HepG2 (cell line): ENCODE measurements at regions of chr17 and their contacts with region 1.

Region 1: DNA sequence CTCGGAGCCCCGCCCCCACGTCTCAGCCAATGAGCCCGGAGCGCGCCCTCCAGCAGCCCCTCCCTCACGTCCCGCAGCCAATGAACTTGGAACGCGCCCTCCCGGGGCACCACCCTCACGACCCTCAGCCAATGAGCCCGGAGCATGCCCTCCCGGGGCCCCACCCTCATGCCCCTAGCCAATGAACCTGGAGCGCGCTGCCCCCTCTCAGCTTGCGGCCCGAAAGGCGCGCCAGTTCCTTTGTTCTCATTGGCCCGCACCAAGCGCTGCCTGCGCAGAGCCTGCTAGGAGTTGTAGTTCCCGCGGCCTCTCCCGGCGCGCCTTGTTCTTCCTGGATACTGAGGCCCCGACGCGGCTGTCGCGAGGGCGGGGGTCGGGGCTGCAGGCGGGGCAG is at the start of gene LRRC45:
- DNase-seq: peak; percentile 99
- ATAC-seq: peak; percentile 76
- H3K4me3 ChIP-seq: peak within 1 kb of the TSS; percentile 80 to 90 (median 90)
- H3K27ac ChIP-seq: peak within 1 kb of the TSS; percentile 78
- H3K4me1 ChIP-seq: peaks cover 69% of the 10 kb centered on the region
- H3K27me3 ChIP-seq: no peaks in the 10 kb centered on the region; a peak in 1 of 5 replicates
- CTCF ChIP-seq: peak; percentile 9; the same call in 1 of the 2 replicates
- EP300 ChIP-seq: no peak
- POLR2A ChIP-seq: no peak
- RAD21 ChIP-seq: no peak
- total RNA-seq, gene LRRC45: 21.4 and 48.1 TPM in 2 replicates

Region 2: GRCh38 chr17:81927653-81928543 is 95.1 kb before region 1 on chr17 and contains the start of gene MAFG:
- CTCF ChIA-PET with region 1: interaction called, 3 read pairs
- POLR2A ChIA-PET with region 1: interaction called, 48 read pairs
- in situ Hi-C with region 1: no loop called
- intact Hi-C with region 1: no loop called
- DNase-seq: peak; percentile 94
- ATAC-seq: peak; percentile 46
- H3K4me3 ChIP-seq: peak within 1 kb of the TSS; percentile 79 to 94 (median 91)
- H3K27ac ChIP-seq: peak within 1 kb of the TSS; percentile 92
- H3K4me1 ChIP-seq: peaks cover 64% of the 10 kb centered on the region
- H3K27me3 ChIP-seq: no peaks in the 10 kb centered on the region
- CTCF ChIP-seq: peak; percentile 73
- EP300 ChIP-seq: 0 out of 4 replicates have a peak, but pooled peaks of 1 of the 2 experiments have one; percentile 11
- POLR2A ChIP-seq: peak in 1 of 2 experiments; percentile 31; a peak in 1 of 4 replicates
- RAD21 ChIP-seq: peak; percentile 85
- total RNA-seq, gene MAFG: 12.4 and 14.5 TPM in 2 replicates

Region 3: DNA sequence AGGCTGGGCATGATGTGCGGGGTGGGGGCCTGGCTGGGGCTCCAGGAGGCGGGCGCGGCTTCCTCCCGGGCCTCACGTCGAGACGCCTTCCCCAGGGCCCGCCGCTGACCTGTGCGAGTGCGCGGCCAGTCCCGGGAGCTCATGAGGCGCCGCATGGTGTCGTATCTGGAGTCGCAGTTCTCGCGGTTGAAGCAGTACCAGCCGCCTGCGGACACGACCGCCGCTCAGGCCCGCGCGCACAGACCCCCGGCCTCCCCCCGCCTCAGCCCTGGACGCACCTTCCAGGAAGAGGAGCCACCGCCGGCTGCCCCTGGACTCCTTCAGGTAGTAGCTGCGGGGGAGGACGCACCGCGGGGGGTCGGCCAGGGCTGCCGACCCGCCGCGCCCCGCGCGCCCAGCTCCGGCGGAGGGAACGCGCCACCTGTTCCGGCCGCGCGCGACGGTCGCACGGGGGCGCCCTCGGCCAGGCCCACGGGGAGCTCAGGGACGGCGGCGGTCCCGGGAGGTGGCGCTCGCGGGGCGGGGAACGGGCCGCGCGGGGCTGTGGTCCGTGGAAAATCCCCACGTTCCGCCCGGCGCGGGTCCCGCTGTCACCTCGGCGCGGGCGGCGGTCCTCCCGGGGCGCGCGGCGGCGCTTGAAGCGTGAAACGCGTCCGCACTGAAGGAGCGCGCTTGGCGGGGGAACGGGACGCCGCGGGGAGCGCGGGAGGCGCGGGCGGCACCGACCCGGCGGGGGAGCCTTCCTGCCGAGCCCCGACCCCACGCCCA is 63.4 kb before region 1 on chr17:
- CTCF ChIA-PET with region 1: interaction called, 181 read pairs
- POLR2A ChIA-PET with region 1: interaction called, 120 read pairs
- in situ Hi-C with region 1: loop called (anchors 5 kb)
- intact Hi-C with region 1: loop called (anchors 1 kb)
- DNase-seq: peak; percentile 40
- ATAC-seq: peak; percentile 49
- H3K4me3 ChIP-seq: peak overlapping the region; percentile 95 to 97 (median 96)
- H3K27ac ChIP-seq: peak overlapping the region; percentile 86
- H3K4me1 ChIP-seq: peaks cover 70% of the 10 kb centered on the region
- H3K27me3 ChIP-seq: no peaks in the 10 kb centered on the region; a peak in 1 of 5 replicates
- CTCF ChIP-seq: peak; percentile 80
- EP300 ChIP-seq: peak in 1 of 2 experiments; percentile 5; a peak in 1 of 4 replicates
- POLR2A ChIP-seq: no peak
- RAD21 ChIP-seq: peak; percentile 100

Region 4: DNA sequence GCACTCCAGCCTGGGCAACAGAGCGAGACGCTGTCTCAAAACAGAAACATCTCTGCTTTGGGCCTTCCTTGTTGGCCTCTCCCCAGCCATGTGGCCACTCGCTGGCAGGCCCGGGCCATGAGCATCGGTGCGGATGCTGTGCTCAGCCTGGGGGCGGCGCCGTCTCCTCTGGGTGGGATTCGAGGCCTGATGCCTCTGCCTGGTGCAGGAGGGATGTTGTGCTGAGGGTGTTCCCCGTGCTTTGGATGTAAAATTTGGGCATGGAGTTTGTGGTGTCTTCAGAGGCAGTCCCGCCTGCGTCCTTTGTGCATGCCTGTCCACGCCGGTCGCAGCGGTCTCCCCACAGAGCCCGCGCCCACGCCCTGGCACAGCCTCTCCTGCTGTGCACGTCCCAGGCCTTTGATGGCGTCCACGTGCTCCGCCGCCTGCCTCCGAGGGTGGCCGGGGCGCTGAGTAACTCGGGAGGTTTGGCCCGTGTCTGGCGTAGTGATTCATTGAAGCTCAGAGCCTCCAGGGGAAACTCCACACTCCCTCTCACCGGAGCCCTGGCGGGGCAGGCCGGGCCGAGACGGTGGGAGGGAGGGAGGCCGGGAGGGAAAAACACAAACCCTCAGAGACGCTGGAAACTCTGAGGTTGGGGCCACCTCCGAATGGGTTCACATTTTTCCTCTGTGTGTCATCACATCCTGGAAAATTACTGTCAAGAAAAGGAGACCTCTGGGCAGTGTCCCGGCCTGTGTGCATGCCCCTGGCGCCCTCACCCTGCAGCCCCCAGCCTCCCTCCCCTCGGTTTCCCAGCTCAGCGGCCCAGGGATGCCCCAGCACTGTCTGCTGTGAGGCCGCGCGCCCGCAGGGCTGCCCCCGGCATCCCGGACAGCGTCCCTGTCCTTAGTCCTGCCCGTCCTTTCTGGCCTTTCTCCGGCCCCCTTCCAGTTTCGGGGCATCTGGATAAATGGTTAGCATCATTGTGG is 19.3 kb before region 1 on chr17:
- CTCF ChIA-PET with region 1: interaction called, 12 read pairs
- POLR2A ChIA-PET with region 1: interaction called, 470 read pairs
- in situ Hi-C with region 1: no loop called
- intact Hi-C with region 1: loop called (anchors 1 kb)
- DNase-seq: peak; percentile 92
- ATAC-seq: peak; percentile 8
- H3K4me3 ChIP-seq: peak overlapping the region in 1 of 3 experiments; percentile 29; a peak in 1 of 6 replicates
- H3K27ac ChIP-seq: peak overlapping the region; percentile 95
- H3K4me1 ChIP-seq: peaks cover 76% of the 10 kb centered on the region
- H3K27me3 ChIP-seq: no peaks in the 10 kb centered on the region
- CTCF ChIP-seq: peak; percentile 51
- EP300 ChIP-seq: peak in 1 of 2 experiments; percentile 85; a peak in 2 of 4 replicates
- POLR2A ChIP-seq: no peak
- RAD21 ChIP-seq: no peak; the same call in 1 of the 2 replicates

Region 5: DNA sequence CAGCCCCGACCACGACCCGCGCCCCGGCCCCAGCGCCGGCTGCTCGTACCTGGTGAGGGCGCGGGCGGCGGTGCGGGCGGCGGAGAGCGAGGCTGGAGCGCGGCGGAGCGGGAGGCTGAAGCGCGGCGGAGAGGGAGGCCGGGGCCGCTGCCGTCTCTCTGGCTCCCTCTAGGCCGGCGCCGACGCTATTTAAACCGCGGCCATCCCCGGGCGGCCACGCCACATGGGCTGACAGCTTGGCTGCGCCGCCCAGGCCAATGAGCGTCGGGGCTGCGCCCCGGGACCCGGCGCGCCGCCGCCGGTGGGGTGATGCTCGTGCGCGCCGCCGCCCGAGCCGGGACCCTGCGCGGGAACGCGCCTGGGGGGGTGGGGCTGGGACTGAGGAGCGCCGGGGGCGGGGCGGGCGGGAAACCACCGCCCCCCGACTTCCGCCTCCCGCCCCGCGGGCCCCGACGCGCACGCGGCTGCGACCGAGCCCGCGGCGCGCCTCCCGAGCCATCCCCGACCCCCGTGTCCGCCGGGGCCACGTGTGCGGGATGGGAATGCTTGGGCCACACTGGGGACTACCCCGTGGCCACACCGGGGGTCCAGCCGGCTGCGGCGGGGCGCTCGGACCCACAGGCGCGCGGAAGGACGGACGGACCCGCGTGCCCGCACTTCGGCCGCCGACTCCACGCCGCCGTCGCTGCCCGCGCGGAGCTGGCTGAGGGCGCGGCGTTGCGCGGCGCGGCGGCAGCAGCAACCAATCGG is 75.3 kb after region 1 on chr17 and contains the start of gene FASN:
- CTCF ChIA-PET with region 1: no interaction called
- POLR2A ChIA-PET with region 1: interaction called, 61 read pairs
- in situ Hi-C with region 1: no loop called
- intact Hi-C with region 1: no loop called
- DNase-seq: peak; percentile 91
- ATAC-seq: peak; percentile 41
- H3K4me3 ChIP-seq: peak within 1 kb of the TSS; percentile 72 to 96 (median 86)
- H3K27ac ChIP-seq: peak within 1 kb of the TSS; percentile 93
- H3K4me1 ChIP-seq: peaks cover 76% of the 10 kb centered on the region
- H3K27me3 ChIP-seq: no peaks in the 10 kb centered on the region; a peak in 1 of 5 replicates
- CTCF ChIP-seq: peak; percentile 84
- EP300 ChIP-seq: peak in 1 of 2 experiments; percentile 55; a peak in 2 of 4 replicates
- POLR2A ChIP-seq: peak in 1 of 2 experiments; percentile 96; a peak in 2 of 4 replicates
- RAD21 ChIP-seq: peak; percentile 76
- total RNA-seq, gene FASN: 101 and 192 TPM in 2 replicates